ENCODE measurements at regions of chr22 and their contacts with region 1.

Region 1: GRCh38 chr22:22710719-22711531 is 66.5 kb downstream of the GGTLC2 start:
- DNase-seq: peak; percentile 56 to 87 (median 76)
- ATAC-seq: peak; percentile 61
- H3K4me3 ChIP-seq: no peak overlapping the region
- H3K4me3 Mint-ChIP-seq: no peak overlapping the region
- H3K27ac ChIP-seq: no peak overlapping the region
- H3K27ac Mint-ChIP-seq: no peak overlapping the region
- H3K4me1 ChIP-seq: no peaks in the 10 kb centered on the region
- H3K4me1 Mint-ChIP-seq: no peaks in the 10 kb centered on the region
- H3K27me3 ChIP-seq: no peaks in the 10 kb centered on the region
- H3K27me3 Mint-ChIP-seq: no peaks in the 10 kb centered on the region
- CTCF ChIP-seq: peak; percentile 96

Region 2: DNA sequence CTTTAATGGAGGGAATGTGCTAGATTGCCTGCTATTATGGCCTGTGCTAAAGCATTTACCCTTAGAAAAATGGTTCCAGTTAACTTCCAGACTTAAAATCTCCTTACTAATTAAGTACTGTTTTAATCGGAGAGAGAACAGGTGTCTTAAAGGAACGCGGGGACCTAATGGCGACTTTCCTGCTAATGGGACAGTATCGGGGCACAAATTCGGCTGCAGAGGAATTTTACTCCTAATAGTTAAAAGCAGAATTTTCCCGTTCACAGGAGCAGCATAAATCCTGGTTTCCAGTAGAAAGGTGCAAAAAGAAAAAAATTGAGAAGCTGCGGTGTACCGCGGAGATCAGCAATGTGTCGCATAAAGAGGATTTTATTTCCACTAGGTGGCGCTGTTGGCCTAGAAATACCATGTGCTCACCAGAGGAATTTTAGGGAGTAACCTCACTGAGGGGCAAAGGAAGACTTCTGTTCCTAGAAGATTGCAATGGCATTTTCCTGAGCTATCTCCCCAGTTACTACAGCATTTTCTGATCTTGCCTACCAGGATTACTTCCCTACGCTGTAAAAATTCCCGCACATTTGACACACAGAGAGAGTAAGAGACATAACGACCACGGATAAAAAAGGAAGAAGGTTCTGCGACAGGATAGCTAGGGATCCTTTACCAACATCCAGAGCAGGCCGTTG is 246.9 kb before region 1 on chr22:
- CTCF ChIA-PET with region 1: no interaction called
- POLR2A ChIA-PET with region 1: no interaction called
- intact Hi-C with region 1: loop called in 1 of 2 experiments (anchors 10 kb)
- DNase-seq: peak in 13 of 14 experiments; percentile 3 to 78 (median 28)
- ATAC-seq: no peak
- H3K4me3 ChIP-seq: no peak overlapping the region
- H3K4me3 Mint-ChIP-seq: no peak overlapping the region
- H3K27ac ChIP-seq: no peak overlapping the region
- H3K27ac Mint-ChIP-seq: no peak overlapping the region
- H3K4me1 ChIP-seq: no peaks in the 10 kb centered on the region
- H3K4me1 Mint-ChIP-seq: no peaks in the 10 kb centered on the region
- H3K27me3 ChIP-seq: peaks cover 17 to 19% of the 10 kb centered on the region in 2 experiments
- H3K27me3 Mint-ChIP-seq: peaks cover 66% of the 10 kb centered on the region
- CTCF ChIP-seq: peak; percentile 88

Region 3: DNA sequence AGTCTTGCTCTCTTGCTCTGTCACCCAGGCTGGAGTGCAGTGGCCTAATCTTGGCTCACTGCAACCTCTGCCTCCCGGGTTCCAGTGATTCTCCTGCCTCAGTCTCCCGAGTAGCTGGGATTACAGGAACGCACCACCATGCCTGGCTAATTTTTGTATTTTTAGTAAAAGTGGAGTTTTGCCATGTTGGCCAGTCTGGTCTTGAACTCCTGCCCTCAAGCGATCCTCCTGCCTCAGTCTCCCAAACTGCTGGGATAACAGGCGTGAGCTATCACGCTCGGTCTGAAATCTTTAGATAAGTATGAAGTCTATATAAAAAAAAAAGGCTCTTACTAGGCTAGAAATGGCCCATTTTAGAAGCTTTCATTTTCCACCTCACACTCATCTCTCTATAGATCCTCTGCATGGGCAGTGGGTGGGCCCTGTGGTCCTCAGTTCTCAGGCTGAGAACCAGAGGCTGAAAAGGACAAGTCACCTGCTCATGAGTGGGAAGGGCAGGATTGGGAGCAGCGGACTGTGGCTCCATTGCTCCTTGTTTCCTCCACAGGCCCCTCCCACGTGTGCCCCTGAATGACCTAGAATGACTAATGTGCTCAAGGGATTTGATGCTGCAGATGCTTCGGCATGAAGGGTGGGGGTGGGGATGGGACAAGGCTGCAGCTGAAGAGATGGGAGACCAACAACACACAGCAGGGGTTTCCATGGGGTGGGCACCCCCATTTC is 132.1 kb before region 1 on chr22:
- CTCF ChIA-PET with region 1: no interaction called
- POLR2A ChIA-PET with region 1: no interaction called
- intact Hi-C with region 1: no loop called
- DNase-seq: no peak
- ATAC-seq: no peak
- H3K4me3 ChIP-seq: no peak overlapping the region
- H3K4me3 Mint-ChIP-seq: no peak overlapping the region
- H3K27ac ChIP-seq: no peak overlapping the region
- H3K27ac Mint-ChIP-seq: no peak overlapping the region
- H3K4me1 ChIP-seq: no peaks in the 10 kb centered on the region
- H3K4me1 Mint-ChIP-seq: no peaks in the 10 kb centered on the region
- H3K27me3 ChIP-seq: peaks cover 0 to 3% of the 10 kb centered on the region in 2 experiments
- H3K27me3 Mint-ChIP-seq: peaks cover 18% of the 10 kb centered on the region
- CTCF ChIP-seq: no peak

Region 4: GRCh38 chr22:22748297-22748743 is 37.4 kb after region 1 on chr22:
- CTCF ChIA-PET with region 1: no interaction called
- POLR2A ChIA-PET with region 1: no interaction called
- intact Hi-C with region 1: loop called in 1 of 2 experiments (anchors 2 kb)
- DNase-seq: peak in 8 of 14 experiments; percentile 8 to 72 (median 40)
- ATAC-seq: peak; percentile 54
- H3K4me3 ChIP-seq: no peak overlapping the region
- H3K4me3 Mint-ChIP-seq: no peak overlapping the region
- H3K27ac ChIP-seq: no peak overlapping the region
- H3K27ac Mint-ChIP-seq: no peak overlapping the region
- H3K4me1 ChIP-seq: peaks cover 19% of the 10 kb centered on the region
- H3K4me1 Mint-ChIP-seq: peaks cover 22% of the 10 kb centered on the region
- H3K27me3 ChIP-seq: peaks cover 0 to 4% of the 10 kb centered on the region in 2 experiments
- H3K27me3 Mint-ChIP-seq: peaks cover 4% of the 10 kb centered on the region
- CTCF ChIP-seq: peak; percentile 63

Region 5: GRCh38 chr22:22770280-22770871 is 59.5 kb after region 1 on chr22:
- CTCF ChIA-PET with region 1: no interaction called
- POLR2A ChIA-PET with region 1: no interaction called
- intact Hi-C with region 1: loop called in 1 of 2 experiments (anchors 1 kb)
- DNase-seq: peak in 12 of 14 experiments; percentile 19 to 69 (median 36)
- ATAC-seq: peak; percentile 54
- H3K4me3 ChIP-seq: no peak overlapping the region
- H3K4me3 Mint-ChIP-seq: no peak overlapping the region
- H3K27ac ChIP-seq: no peak overlapping the region
- H3K27ac Mint-ChIP-seq: no peak overlapping the region
- H3K4me1 ChIP-seq: peaks cover 21% of the 10 kb centered on the region
- H3K4me1 Mint-ChIP-seq: no peaks in the 10 kb centered on the region
- H3K27me3 ChIP-seq: no peaks in the 10 kb centered on the region
- H3K27me3 Mint-ChIP-seq: peaks cover 12% of the 10 kb centered on the region
- CTCF ChIP-seq: peak; percentile 75

Region 6: GRCh38 chr22:23128269-23129108 is 417.6 kb after region 1 on chr22:
- CTCF ChIA-PET with region 1: no interaction called
- POLR2A ChIA-PET with region 1: no interaction called
- intact Hi-C with region 1: loop called in 1 of 2 experiments (anchors 10 kb)
- DNase-seq: peak; percentile 59 to 86 (median 70)
- ATAC-seq: peak; percentile 89
- H3K4me3 ChIP-seq: no peak overlapping the region
- H3K4me3 Mint-ChIP-seq: no peak overlapping the region
- H3K27ac ChIP-seq: no peak overlapping the region
- H3K27ac Mint-ChIP-seq: no peak overlapping the region
- H3K4me1 ChIP-seq: peaks cover 7% of the 10 kb centered on the region
- H3K4me1 Mint-ChIP-seq: peaks cover 5% of the 10 kb centered on the region
- H3K27me3 ChIP-seq: no peaks in the 10 kb centered on the region
- H3K27me3 Mint-ChIP-seq: no peaks in the 10 kb centered on the region
- CTCF ChIP-seq: peak; percentile 82

Measured in CD4-positive, alpha-beta T cell (primary cell).